Activated CD4-positive, alpha-beta memory T cell treated with anti-CD3 and anti-CD28 coated beads for 36 hours (primary cell): ENCODE measurements at regions of chr1 and their contacts with region 1.

Region 1: DNA sequence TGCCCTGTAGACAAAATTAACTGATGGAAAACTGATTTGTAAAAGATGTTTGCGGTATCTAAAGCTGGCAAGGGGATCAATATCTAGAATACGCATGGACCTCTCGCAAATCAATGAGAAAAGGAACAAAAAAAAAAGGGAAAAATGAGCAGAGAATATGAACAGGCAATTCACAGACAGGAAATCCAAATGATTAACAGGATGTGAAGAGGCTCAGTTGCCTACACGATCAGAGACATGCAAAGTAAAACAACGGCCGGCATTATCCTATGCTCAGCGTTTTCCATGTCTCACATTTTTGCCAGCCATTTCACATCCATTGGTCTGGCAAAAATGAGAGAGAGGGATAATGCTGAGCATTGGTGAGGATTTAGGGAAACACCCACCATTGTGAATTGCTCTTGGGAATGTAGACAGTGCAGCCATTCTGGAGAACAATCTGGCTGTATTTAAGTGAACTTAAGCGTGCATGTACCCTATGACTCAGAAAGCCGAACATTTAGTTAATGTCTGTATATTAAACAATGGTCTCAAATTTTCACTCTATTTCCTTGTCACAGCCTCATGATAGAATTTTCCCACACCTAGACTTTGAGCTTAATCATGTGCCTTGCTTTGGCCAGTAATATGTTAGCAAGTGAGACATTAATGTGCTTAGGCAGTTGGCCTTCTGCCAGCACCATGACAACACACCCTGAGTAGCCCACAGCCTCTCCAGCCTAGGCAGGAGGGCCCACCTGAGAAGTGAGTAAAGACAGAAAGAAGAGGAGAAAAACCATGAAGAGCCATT is 61.0 kb upstream of the NBPF3 start:
- DNase-seq: no peak
- H3K4me3 Mint-ChIP-seq: no peak overlapping the region
- H3K27ac Mint-ChIP-seq: no peak overlapping the region
- H3K4me1 Mint-ChIP-seq: peaks cover 9% of the 10 kb centered on the region
- H3K27me3 Mint-ChIP-seq: peaks cover 10% of the 10 kb centered on the region

Region 2: GRCh38 chr1:21261551-21262281 is 117.2 kb before region 1 on chr1:
- CTCF ChIA-PET with region 1: no interaction called
- POLR2A ChIA-PET with region 1: no interaction called
- intact Hi-C with region 1: no loop called
- DNase-seq: peak; percentile 65
- H3K4me3 Mint-ChIP-seq: no peak overlapping the region
- H3K27ac Mint-ChIP-seq: peak overlapping the region; percentile 91
- H3K4me1 Mint-ChIP-seq: peaks cover 61% of the 10 kb centered on the region
- H3K27me3 Mint-ChIP-seq: no peaks in the 10 kb centered on the region

Region 3: GRCh38 chr1:21362096-21362495 is 16.8 kb before region 1 on chr1:
- CTCF ChIA-PET with region 1: no interaction called
- POLR2A ChIA-PET with region 1: no interaction called
- intact Hi-C with region 1: no loop called
- DNase-seq: no peak
- H3K4me3 Mint-ChIP-seq: no peak overlapping the region
- H3K27ac Mint-ChIP-seq: peak overlapping the region; percentile 13
- H3K4me1 Mint-ChIP-seq: peaks cover 4% of the 10 kb centered on the region
- H3K27me3 Mint-ChIP-seq: no peaks in the 10 kb centered on the region

Region 4: GRCh38 chr1:21468599-21468998 is 89.7 kb after region 1 on chr1:
- CTCF ChIA-PET with region 1: interaction called, 3 read pairs
- POLR2A ChIA-PET with region 1: no interaction called
- intact Hi-C with region 1: loop called (anchors 10 kb)
- DNase-seq: peak; percentile 58
- H3K4me3 Mint-ChIP-seq: no peak overlapping the region
- H3K27ac Mint-ChIP-seq: no peak overlapping the region
- H3K4me1 Mint-ChIP-seq: no peaks in the 10 kb centered on the region
- H3K27me3 Mint-ChIP-seq: no peaks in the 10 kb centered on the region